Activated T-helper 2 cell treated with anti-CD3 and anti-CD28 coated beads, Interferon-gamma antibody, Interleukin-2, Interleukin-4, amounts not matched to agents 10 μg/mL and 5 μg/mL and 100 μg/mL, durations not matched to agents 14 hours and 24 hours and 36 hours (primary cell): ENCODE measurements at regions of chr10 and their contacts with region 1.

Region 1: DNA sequence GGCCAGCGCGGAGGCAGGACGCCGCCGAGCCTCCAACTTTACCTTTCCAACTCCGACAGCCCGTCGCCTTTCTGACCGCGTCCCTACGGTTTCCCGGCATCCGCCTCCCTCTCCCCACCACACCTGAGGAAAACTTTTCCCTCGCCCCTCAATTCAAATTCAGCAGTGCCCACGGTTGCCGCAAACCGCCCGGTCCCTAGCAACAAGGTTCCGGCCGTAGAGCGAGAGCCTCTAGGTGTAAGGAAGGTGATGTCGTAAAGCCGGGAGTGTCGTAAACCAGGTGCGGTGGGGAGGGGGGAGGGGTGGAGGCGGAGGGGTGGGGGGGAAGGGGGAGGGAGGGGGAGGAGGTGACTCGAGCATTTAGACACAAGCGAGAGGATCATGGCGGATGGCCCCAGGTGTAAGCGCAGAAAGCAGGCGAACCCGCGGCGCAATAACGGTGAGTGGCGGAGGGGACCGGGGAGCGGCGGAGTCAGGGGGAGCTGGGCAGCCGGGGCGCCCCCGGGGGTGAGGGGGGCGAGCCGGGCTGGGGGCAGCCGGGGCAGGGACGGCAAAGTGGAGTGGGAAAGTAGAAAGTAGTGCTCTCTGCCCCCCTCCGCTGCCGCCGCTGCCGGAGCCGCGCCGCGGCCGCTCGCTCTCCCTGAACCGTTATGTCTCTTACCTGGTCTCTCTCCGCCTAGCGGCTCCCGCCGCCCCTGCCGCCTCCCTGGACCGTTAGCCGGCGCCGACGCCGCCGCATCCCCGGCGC is at the start of gene ZEB1:
- DNase-seq: peak; percentile 86
- H3K4me3 Mint-ChIP-seq: peak within 1 kb of the TSS; percentile 99
- H3K27ac Mint-ChIP-seq: peak within 1 kb of the TSS; percentile 100
- H3K4me1 Mint-ChIP-seq: peaks cover 42% of the 10 kb centered on the region
- H3K27me3 Mint-ChIP-seq: no peaks in the 10 kb centered on the region
- total RNA-seq, gene ZEB1: 68.6 and 70.0 TPM in 2 replicates

Region 2: GRCh38 chr10:30687698-30688219 is 631.3 kb before region 1 on chr10:
- intact Hi-C with region 1: loop called (anchors 10 kb)
- DNase-seq: peak; percentile 62
- H3K4me3 Mint-ChIP-seq: no peak overlapping the region
- H3K27ac Mint-ChIP-seq: peak overlapping the region; percentile 92
- H3K4me1 Mint-ChIP-seq: peaks cover 75% of the 10 kb centered on the region
- H3K27me3 Mint-ChIP-seq: no peaks in the 10 kb centered on the region

Region 3: DNA sequence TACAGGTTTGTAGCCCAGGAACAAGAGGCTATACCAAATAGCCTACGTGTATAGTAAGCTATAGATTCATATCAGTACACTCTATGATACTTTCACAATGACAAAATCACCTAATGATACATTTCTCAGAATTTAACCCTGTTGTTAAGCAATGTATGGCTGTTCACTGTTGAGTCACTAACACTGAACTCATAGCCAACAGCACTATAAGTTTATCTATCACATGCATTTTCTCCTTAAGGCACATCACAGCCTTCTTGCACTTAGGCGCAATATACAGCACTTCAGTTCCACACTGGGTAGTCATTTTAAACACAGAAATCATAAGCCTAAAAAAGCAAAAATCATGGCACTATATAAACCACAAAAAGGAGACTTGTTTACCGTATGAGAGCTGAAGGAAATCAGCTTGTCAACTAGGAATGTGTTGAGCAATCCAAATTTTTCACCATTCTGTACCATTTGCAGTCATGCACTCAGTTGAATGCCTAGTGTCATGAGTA is 332.9 kb before region 1 on chr10:
- intact Hi-C with region 1: loop called (anchors 5 kb)
- DNase-seq: no peak
- H3K4me3 Mint-ChIP-seq: peak overlapping the region; percentile 31
- H3K27ac Mint-ChIP-seq: peak overlapping the region; percentile 91
- H3K4me1 Mint-ChIP-seq: peaks cover 30% of the 10 kb centered on the region
- H3K27me3 Mint-ChIP-seq: no peaks in the 10 kb centered on the region

Region 4: GRCh38 chr10:31083765-31084184 is 235.3 kb before region 1 on chr10:
- intact Hi-C with region 1: loop called (anchors 1 kb)
- DNase-seq: peak; percentile 55
- H3K4me3 Mint-ChIP-seq: no peak overlapping the region
- H3K27ac Mint-ChIP-seq: no peak overlapping the region
- H3K4me1 Mint-ChIP-seq: peaks cover 13% of the 10 kb centered on the region
- H3K27me3 Mint-ChIP-seq: no peaks in the 10 kb centered on the region

Region 5: GRCh38 chr10:31146491-31147209 is 172.4 kb before region 1 on chr10:
- intact Hi-C with region 1: loop called (anchors 2 kb)
- DNase-seq: no peak
- H3K4me3 Mint-ChIP-seq: peak overlapping the region; percentile 66
- H3K27ac Mint-ChIP-seq: peak overlapping the region; percentile 81
- H3K4me1 Mint-ChIP-seq: peaks cover 48% of the 10 kb centered on the region
- H3K27me3 Mint-ChIP-seq: no peaks in the 10 kb centered on the region

Region 6: GRCh38 chr10:31353574-31353973 is 34.5 kb after region 1 on chr10:
- intact Hi-C with region 1: loop called (anchors 1 kb)
- DNase-seq: no peak
- H3K4me3 Mint-ChIP-seq: no peak overlapping the region
- H3K27ac Mint-ChIP-seq: peak overlapping the region; percentile 72
- H3K4me1 Mint-ChIP-seq: peaks cover 46% of the 10 kb centered on the region
- H3K27me3 Mint-ChIP-seq: no peaks in the 10 kb centered on the region

Region 7: GRCh38 chr10:32332299-32332750 is 1013.3 kb after region 1 on chr10:
- intact Hi-C with region 1: no loop called
- DNase-seq: peak; percentile 80
- H3K4me3 Mint-ChIP-seq: peak overlapping the region; percentile 85
- H3K27ac Mint-ChIP-seq: peak overlapping the region; percentile 95
- H3K4me1 Mint-ChIP-seq: peaks cover 76% of the 10 kb centered on the region
- H3K27me3 Mint-ChIP-seq: no peaks in the 10 kb centered on the region